Sciatic nerve (tissue), 2 donors: ENCODE measurements at regions of chr9 and their contacts with region 1.

Region 1: DNA sequence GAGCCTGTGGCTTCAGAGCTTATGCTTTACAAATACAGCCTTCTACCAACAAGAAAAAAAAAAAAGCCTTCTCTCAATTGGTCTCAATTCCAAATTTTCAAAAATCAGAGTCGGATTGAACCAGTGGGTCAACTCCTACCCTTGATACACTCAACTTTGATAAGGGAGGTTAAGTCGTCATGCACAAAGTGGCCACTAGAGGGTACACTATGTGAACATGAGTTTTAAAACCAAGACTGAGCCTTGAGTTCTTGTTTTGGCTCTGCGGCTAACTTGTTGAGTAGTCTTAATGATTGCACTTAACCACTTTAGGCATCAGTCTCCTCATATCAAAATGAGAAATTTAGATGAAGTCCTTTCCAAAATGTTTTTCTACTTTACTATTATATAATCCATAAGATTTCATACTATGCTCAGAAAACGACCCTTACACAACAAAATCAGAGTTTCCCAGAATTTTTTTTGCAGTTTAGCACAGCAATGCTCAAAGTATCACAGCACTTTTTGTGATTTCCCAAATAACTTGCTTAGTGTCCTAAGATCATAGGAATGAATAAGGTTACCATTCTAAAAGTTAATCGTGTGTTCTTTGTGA is 92.9 kb upstream of the MTAP start:
- DNase-seq: peak; percentile 74
- ATAC-seq: peak; percentile 38

Region 2: DNA sequence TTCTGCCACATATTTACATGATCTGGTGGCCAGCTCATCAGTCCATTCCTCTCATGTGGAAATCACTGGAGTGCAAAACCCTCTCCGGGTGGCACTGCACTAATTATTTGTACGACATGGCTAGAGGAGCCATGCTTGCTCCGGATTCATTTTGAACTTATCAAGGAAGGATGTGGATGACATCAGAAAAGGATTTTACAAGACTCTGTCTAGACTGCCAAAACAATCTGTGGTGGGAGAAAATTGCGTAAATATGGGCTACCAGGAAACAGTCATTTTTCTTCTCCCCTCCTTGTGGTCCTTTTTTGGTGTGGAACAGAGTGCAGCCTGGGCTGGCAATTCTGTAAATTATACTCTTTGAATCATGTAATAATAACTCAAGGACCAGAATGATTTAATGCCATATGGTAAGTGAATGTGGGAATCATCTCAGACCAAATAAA is 104.1 kb before region 1 on chr9:
- intact Hi-C with region 1: no loop called
- DNase-seq: no peak
- ATAC-seq: no peak

Region 3: DNA sequence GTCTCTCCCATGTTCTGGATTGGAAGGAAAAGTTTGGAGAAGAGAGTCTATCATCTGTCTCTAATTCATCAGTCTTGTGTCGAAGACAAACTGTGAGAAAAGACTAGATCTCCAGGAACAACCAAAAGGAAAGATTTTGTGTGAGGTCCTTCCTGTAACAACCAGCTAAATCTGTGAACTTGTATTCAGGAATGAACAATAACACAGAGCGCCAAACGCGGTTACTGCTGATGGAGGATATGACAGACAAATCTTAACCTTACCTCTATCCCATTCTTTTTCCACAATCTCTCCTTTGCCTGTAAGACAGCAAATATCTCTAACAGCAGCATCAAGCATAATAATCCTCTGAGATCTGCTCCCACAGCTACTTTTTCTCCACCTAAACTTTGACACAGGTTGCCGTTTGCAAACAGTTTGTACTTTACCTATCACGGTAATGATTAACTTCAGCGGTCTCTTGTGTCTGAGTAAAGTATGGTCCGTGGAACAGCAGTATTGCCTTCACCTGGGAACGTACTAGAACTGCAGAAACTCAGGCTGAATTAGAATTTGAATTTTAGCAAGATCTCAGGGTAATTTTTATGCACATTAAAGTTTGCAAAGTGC is 1728.8 kb after region 1 on chr9:
- intact Hi-C with region 1: loop called (anchors 5 kb)
- DNase-seq: no peak
- ATAC-seq: no peak